Mucosa of descending colon (tissue), 3 donors: ENCODE measurements at regions of chr6 and their contacts with region 1.

Region 1: DNA sequence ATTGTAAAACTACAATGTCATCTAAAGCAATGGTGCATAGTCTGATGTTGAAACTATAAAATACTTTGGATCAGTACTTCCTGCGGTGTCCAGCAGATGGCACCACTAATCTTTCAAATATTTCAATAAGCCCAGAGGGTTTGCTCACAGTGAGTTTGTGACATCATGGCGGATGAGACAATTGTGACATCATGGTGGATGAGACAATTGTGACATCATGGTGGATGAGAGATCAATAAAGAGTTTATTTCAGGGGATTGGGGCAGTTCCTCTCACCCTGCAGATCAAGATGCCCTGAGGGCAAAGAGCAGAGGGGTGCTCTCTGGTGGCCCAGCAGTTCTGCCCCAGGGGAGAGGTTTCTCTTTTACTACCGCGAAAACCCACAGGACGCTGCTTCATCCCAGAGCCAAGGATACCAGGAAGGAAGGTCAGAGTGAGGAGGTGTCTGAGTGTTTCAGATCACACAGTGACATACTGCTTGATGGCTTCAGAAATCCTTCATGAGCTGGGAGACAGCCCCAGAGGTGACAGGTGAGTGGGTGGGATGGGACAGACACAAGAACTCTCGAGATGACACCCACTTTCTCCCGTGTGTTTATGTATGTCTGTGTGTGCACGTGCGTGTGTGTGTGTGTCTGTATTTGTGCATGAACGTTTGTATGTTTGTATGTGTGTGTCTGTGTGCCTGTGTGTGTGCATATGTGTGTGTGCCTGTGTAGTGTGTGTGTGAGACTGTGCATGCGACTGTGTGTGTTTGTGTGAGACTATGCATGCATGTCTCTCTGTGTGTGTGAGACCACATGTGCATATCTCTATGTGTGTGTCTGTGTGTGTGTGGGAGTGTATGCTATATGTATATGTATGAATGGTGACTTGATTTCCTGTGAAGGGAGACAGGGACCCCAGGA is 7.3 kb upstream of the ULBP2 start:
- DNase-seq: peak in 1 of 3 donors; percentile 91
- ATAC-seq: peak; percentile 78
- H3K4me3 ChIP-seq: no peak overlapping the region
- H3K4me1 ChIP-seq: peaks cover 10% of the 10 kb centered on the region
- CTCF ChIP-seq: peak; percentile 61

Region 2: GRCh38 chr6:149881066-149881766 is 53.3 kb before region 1 on chr6:
- intact Hi-C with region 1: no loop called
- DNase-seq: no peak
- ATAC-seq: no peak
- H3K4me3 ChIP-seq: no peak overlapping the region
- H3K4me1 ChIP-seq: peaks cover 2% of the 10 kb centered on the region
- CTCF ChIP-seq: no peak

Region 3: GRCh38 chr6:150016324-150017185 is 82.1 kb after region 1 on chr6:
- intact Hi-C with region 1: loop called (anchors 2 to 5 kb)
- DNase-seq: peak in 1 of 3 donors; percentile 82
- ATAC-seq: peak; percentile 86
- H3K4me3 ChIP-seq: no peak overlapping the region
- H3K4me1 ChIP-seq: no peaks in the 10 kb centered on the region
- CTCF ChIP-seq: peak; percentile 60

Region 4: DNA sequence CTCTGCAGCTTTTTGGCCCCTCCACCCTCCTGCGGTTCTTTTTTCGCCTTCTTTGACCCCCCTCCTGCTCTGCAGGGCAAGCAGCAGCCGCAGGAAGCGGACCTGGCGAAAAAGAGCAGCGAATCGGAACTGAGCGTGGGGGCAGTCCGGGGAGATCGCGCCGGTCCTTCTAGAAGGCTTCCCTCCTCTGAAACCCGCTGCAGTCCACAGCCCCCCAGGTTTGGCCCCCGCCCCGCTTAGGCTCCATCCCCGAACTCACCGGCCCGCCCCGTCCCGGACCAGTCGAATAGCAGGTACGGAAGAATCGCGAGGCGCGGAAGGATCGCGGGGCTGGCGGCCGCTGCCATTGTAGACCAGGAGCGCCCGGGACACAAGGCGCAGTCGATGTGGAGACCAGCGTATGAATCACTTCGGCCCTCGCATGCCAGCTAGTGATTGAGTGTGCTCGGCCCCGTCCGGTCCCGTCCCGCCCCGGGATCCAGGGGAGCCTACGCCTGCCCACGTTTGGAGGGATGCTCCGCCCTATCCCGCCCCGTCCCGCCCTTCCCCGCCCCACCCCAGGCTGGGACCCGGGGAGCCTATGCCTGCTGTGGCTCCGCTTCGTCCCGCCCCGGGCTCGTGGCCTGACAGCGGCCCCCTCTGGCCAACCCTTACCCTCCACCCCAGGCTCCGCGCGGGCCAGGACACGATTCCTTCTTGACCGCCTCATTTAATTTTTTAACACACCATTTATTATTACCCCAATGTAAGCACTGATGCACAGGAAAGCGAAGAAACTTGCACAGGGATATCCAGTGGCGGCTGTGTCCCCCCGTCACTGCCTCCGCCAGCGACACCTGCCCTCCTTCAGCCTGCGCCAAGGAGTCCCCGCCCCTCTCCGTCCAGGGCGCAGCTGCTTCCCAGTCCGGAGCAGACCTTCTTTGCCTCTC is 134.5 kb after region 1 on chr6 and contains the start of gene ULBP3:
- intact Hi-C with region 1: no loop called
- DNase-seq: peak; percentile 90 to 95 (median 93)
- ATAC-seq: peak; percentile 84
- H3K4me3 ChIP-seq: peak within 1 kb of the TSS; percentile 24
- H3K4me1 ChIP-seq: peaks cover 17% of the 10 kb centered on the region
- CTCF ChIP-seq: peak; percentile 45
- total RNA-seq, gene ULBP3: 0.32 to 1.9 (median 1.9) TPM